ENCODE measurements at regions of chr2 and their contacts with region 1.

Region 1: DNA sequence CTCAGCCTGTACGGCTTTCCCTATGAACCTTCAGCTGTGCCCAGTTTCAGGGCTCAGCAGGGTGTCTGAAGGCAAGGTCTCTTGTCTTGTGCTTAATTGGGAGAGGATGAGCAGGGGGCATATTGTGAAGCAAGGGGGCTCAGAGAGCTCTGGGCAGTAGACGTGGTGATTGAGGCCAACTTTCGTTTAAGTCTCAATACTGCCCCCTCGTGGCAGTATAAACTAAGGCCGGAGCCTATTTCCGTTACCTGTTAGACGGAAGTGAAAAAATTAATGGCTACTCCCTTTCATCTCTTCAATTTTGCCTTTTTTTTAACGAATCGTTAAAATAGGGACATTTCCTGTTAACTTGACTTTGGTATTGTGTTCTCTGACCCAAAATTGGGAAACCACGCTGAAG is 193.4 kb downstream of the TDRD15 start:
- DNase-seq: peak; percentile 45 to 74 (median 63)
- H3K4me3 ChIP-seq: no peak overlapping the region
- H3K4me3 Mint-ChIP-seq: no peak overlapping the region
- H3K27ac ChIP-seq: no peak overlapping the region
- H3K27ac Mint-ChIP-seq: no peak overlapping the region
- H3K4me1 ChIP-seq: peaks cover 0 to 3% of the 10 kb centered on the region in 2 donors
- H3K4me1 Mint-ChIP-seq: peaks cover 6% of the 10 kb centered on the region
- H3K27me3 ChIP-seq: no peaks in the 10 kb centered on the region
- H3K27me3 Mint-ChIP-seq: no peaks in the 10 kb centered on the region
- CTCF ChIP-seq: peak; percentile 84

Region 2: DNA sequence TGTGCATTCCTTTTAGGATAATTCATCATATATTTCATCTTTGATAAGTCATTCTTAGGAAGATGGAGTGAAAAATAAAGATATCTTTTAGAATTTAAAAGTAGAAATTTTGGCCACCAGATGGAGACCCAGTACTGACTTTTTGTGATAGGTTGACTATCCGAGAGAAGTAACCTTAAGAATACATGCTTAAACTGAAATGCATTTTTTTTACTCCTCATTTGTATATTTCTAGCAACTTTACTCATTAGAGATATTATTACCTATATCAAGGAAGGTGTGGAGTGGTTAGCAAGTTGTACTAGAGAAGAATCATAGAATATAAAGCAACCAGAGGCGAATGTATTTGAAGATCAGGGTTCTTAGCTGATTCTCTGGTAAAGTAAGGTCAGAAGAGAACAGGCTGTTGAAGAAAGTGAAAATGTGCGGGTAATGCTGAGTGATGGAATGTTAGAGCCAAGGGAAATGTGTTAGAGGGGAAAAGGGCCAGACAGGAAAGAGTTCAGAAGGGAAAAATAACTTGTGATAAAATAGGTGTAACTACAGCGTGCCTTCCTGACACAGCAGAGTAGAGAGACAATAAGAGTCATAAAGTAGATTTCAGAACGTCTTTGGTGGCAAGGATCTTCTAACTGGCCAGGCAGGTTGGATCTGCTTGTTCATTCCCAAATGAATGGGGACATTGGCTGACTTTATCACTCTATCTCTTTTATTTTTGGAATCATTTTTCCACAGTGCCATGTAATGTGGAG is 141.1 kb before region 1 on chr2:
- intact Hi-C with region 1: loop called (anchors 2 kb)
- DNase-seq: peak in 1 of 3 donors; percentile 27
- H3K4me3 ChIP-seq: no peak overlapping the region
- H3K4me3 Mint-ChIP-seq: no peak overlapping the region
- H3K27ac ChIP-seq: no peak overlapping the region
- H3K27ac Mint-ChIP-seq: peak overlapping the region in 1 of 7 donors; percentile 45
- H3K4me1 ChIP-seq: no peaks in the 10 kb centered on the region
- H3K4me1 Mint-ChIP-seq: no peaks in the 10 kb centered on the region
- H3K27me3 ChIP-seq: peaks cover 0 to 11% of the 10 kb centered on the region in 2 donors
- H3K27me3 Mint-ChIP-seq: peaks cover 7 to 20% (median 7%) of the 10 kb centered on the region in 3 donors
- CTCF ChIP-seq: peak; percentile 58

Measured in CD14-positive monocyte (primary cell).